Ascending aorta (tissue), 2 donors: ENCODE measurements at regions of chr5 and their contacts with region 1.

Region 1: DNA sequence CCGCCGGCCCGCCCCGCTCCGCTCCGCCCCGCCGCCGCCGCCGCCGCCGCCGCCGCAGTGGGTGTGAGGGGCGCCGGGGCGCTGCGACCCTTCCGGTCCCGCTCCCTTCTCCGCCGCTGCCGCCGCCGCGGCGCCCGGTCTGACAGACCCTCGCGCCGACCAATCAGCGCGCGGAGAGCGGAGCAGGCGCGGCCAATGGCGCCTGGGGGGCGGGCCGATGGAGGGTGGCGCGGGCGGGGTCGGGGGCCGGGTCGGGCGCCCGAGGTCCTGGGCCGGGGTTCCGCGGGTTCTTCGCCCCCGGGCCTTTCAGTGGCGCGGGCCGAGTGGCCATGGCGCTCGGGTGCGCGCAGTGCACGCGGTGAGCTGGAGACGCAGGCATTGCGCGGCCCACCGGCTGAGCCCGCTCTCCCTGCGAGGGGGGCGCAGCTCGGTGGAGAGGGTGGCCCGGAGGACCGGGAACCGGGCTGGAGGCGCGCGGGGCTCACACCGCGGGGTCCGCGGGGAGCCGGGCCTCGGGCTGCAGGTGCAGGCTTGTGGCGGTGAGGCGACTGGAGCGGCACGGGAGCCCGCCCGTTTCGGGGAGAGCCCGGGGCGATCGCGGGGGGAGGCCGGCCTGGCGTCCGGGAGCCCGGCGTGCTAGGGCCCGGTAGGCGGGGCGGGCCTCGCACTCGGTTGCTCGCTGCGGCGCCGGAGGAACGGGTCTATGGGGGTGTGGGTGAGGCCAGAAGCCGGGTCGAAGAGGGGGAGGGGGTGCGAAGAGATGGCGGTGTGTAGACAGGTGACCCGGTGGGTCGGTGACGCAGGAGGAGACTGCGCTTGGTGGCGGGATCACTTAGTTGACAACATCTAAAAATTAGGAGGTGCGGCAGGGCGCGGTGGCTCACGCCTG is at the start of gene MAPK9:
- DNase-seq: peak in 1 of 2 donors; percentile 89
- H3K4me3 ChIP-seq: peak within 1 kb of the TSS; percentile 84 to 88
- H3K27ac ChIP-seq: peak within 1 kb of the TSS; percentile 73 to 88
- H3K4me1 ChIP-seq: peaks cover 3 to 13% of the 10 kb centered on the region in 2 donors
- H3K27me3 ChIP-seq: no peaks in the 10 kb centered on the region
- CTCF ChIP-seq: no peak
- total RNA-seq, gene MAPK9: 12.9 TPM

Region 2: DNA sequence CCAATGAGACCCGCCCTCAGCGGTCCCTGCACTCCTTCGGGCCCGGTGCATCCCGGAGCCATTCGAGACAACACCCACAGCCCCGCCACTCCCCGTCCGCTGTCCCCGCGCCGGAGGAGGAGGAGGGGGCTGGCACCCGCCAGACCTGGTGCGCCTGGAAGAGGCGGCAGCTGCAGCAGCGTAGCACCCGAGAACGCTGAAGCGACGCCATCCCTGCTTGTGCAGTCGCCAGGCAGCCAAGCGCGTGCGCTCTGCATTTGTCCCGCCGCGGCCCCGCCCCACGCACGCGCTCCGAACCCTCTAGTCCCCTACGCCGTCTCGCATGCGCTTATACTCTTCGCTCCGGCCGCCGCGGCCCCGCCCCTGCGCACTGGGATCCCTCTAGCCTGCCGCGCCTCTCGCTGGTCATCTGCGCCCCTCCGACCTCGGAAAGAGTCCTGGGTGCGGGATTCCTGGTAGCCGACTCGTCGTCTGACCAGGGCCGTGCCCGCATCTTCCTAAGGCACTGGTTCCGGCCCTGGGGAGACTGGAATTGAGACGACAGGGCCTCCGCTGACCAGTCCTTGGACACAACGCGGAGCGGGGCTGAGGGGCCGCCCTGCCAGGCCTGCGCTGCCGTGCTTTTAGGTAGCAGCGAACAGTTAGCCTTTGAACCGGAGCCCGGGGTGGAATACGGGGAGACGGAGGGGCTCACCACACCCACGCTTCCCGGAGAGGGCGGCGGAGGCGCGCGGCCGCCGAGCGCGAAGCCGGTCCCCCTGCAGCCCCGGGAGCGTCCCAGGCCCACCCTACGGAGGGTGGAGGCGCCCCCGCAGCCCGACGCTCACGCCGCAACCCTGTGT is 433.4 kb before region 1 on chr5 and contains the start of gene MRNIP:
- intact Hi-C with region 1: loop called (anchors 10 kb)
- DNase-seq: peak; percentile 83 to 98
- H3K4me3 ChIP-seq: peak within 1 kb of the TSS; percentile 79 to 93
- H3K27ac ChIP-seq: peak within 1 kb of the TSS; percentile 78 to 86
- H3K4me1 ChIP-seq: peaks cover 0 to 8% of the 10 kb centered on the region in 2 donors
- H3K27me3 ChIP-seq: no peaks in the 10 kb centered on the region
- CTCF ChIP-seq: peak in 1 of 3 experiments; percentile 33
- total RNA-seq, gene MRNIP: 17.3 TPM

Region 3: GRCh38 chr5:180071531-180072255 is 220.5 kb before region 1 on chr5 and contains the start of gene RNF130:
- intact Hi-C with region 1: loop called (anchors 5 kb)
- DNase-seq: peak; percentile 72 to 95
- H3K4me3 ChIP-seq: peak within 1 kb of the TSS; percentile 74 to 94
- H3K27ac ChIP-seq: peak within 1 kb of the TSS; percentile 94 to 98
- H3K4me1 ChIP-seq: peaks cover 0 to 10% of the 10 kb centered on the region in 2 donors
- H3K27me3 ChIP-seq: no peaks in the 10 kb centered on the region
- CTCF ChIP-seq: no peak
- total RNA-seq, gene RNF130: 86.7 TPM

Region 4: GRCh38 chr5:180208435-180209081 is 83.6 kb before region 1 on chr5:
- intact Hi-C with region 1: no loop called
- DNase-seq: no peak
- H3K4me3 ChIP-seq: peak overlapping the region; percentile 21 to 37
- H3K27ac ChIP-seq: no peak overlapping the region
- H3K4me1 ChIP-seq: no peaks in the 10 kb centered on the region
- H3K27me3 ChIP-seq: no peaks in the 10 kb centered on the region
- CTCF ChIP-seq: no peak

Region 5: DNA sequence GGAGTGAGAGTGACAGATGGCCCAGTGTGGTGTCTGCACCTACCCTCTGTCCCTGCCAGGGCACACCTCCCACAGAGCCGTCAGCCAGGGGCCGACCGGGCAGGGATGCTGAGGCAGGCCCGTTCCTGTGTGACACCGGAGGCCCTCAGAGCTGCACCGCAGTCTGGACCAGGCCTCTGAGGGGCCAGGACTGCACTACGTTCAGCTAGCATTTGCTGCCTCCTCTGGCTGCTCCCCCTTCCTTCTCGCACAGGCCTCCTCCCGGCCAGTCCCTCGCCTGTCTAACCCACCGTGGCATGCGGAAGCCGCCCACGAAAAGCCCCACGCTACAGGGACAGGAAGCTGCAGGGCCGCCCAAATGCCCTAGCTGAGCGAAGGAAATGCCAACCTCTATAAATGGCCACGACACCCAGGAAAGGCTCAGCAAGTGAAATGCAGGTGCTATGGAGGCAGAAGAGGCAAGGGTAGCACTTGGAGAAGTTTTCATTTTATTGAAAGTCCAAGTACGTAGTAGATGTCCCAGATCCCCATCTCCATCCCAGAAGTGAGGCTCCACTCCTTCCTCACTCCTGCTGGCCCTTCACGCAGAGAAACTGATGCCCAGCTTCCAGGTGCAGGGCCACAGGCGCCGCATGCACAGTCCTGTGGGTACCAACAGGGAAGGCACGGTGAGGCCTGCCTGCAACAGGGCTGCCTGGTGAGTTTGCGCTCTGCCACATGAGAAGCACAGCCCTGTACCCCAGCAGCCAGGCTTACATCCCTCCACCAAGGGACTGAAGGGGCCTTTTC is 39.0 kb before region 1 on chr5:
- intact Hi-C with region 1: no loop called
- DNase-seq: no peak
- H3K4me3 ChIP-seq: no peak overlapping the region
- H3K27ac ChIP-seq: no peak overlapping the region
- H3K4me1 ChIP-seq: no peaks in the 10 kb centered on the region
- H3K27me3 ChIP-seq: no peaks in the 10 kb centered on the region
- CTCF ChIP-seq: no peak

Region 6: DNA sequence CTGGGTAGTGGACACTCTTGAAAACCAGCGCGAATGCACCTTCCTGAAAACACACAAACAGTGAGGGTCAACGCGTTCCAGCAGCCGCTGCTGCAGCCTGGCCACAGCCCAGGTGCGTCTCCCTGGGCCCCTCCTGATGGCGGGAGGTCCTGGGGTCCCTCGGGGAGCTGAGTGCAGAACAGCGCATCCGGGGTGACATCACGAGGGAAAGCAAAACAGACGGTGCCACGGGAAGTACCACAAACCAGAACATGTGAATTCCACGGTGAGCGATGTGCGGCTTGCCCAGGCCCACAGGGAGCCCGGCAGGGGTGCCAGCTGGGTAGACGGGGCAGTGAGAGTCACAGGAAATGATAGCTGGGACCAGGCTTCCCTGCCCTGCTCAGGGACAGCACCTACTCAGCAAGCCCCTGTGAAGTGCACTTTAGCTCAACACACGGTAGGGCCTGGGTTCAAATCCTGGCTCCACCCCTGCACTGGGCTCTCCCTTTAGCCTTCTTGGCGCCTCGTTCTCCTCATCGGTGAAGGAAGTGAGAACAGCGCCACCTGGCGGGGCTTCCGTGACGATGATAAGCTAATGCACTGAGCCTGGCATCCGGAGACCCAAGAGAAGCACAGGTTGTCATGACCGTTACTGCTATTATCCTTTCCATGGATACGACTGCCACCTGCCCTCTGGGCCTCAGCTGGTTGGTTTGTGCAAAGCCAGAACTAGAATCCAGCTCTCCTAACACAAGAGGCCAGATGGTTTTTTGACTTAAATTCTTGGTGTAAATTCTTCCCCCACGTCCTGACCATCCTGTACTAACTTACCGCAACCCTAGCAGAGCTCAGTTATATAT is 36.3 kb after region 1 on chr5:
- intact Hi-C with region 1: loop called (anchors 1 kb)
- DNase-seq: peak in 1 of 2 donors; percentile 88
- H3K4me3 ChIP-seq: no peak overlapping the region
- H3K27ac ChIP-seq: no peak overlapping the region
- H3K4me1 ChIP-seq: peaks cover 0 to 5% of the 10 kb centered on the region in 2 donors
- H3K27me3 ChIP-seq: no peaks in the 10 kb centered on the region
- CTCF ChIP-seq: peak; percentile 52 to 71 (median 65)

Region 7: GRCh38 chr5:180353048-180353979 is 61.1 kb after region 1 on chr5 and contains the start of gene GFPT2:
- intact Hi-C with region 1: loop called (anchors 1 kb)
- DNase-seq: peak; percentile 35 to 91
- H3K4me3 ChIP-seq: peak within 1 kb of the TSS; percentile 83 to 88
- H3K27ac ChIP-seq: peak within 1 kb of the TSS; percentile 51 to 62
- H3K4me1 ChIP-seq: peaks cover 0 to 3% of the 10 kb centered on the region in 2 donors
- H3K27me3 ChIP-seq: no peaks in the 10 kb centered on the region
- CTCF ChIP-seq: no peak
- total RNA-seq, gene GFPT2: 25.2 TPM

Region 8: GRCh38 chr5:180366326-180366725 is 74.1 kb after region 1 on chr5:
- intact Hi-C with region 1: no loop called
- DNase-seq: peak in 1 of 2 donors; percentile 79
- H3K4me3 ChIP-seq: peak overlapping the region in 1 of 2 donors; percentile 6
- H3K27ac ChIP-seq: peak overlapping the region; percentile 8 to 44
- H3K4me1 ChIP-seq: no peaks in the 10 kb centered on the region
- H3K27me3 ChIP-seq: no peaks in the 10 kb centered on the region
- CTCF ChIP-seq: no peak

Region 9: DNA sequence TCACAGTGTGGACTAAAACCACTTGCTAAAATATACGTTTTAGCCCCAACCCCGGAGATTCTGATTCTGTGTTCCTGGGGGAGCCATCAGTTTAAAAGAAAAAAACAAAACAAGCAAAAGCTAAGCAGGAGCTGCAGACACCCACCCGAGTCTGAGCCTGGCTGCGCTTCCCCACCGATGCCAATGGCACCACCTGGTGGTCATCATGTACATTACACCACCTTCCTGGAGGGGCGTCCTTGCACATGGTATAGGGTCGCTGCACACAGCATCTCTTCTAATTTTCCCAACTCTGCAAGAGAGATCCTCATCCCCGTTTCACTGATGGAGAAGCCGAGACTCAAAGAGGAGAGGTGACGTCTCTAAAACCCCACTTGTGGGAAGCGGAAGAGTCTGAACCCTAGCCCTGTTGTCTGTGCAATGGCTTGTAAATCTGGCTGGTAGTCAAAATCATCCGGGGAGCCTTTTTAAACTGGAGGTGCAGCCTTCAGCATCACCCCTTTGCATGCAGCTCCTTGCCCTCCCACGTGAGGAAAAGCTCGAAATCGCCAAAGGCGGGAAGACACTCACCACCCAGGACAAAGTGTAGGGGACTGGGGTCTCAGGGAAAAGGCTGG is 178.9 kb after region 1 on chr5:
- intact Hi-C with region 1: loop called (anchors 1 kb)
- DNase-seq: peak in 1 of 2 donors; percentile 70
- H3K4me3 ChIP-seq: no peak overlapping the region
- H3K27ac ChIP-seq: no peak overlapping the region
- H3K4me1 ChIP-seq: no peaks in the 10 kb centered on the region
- H3K27me3 ChIP-seq: no peaks in the 10 kb centered on the region
- CTCF ChIP-seq: peak; percentile 68 to 92 (median 91)

Region 10: GRCh38 chr5:180494060-180494509 is 201.9 kb after region 1 on chr5 and contains the start of gene CNOT6:
- intact Hi-C with region 1: loop called (anchors 1 kb)
- DNase-seq: peak; percentile 68 to 94
- H3K4me3 ChIP-seq: peak within 1 kb of the TSS; percentile 94 to 95
- H3K27ac ChIP-seq: peak within 1 kb of the TSS; percentile 84 to 98
- H3K4me1 ChIP-seq: peaks cover 4 to 15% of the 10 kb centered on the region in 2 donors
- H3K27me3 ChIP-seq: no peaks in the 10 kb centered on the region
- CTCF ChIP-seq: no peak
- total RNA-seq, gene CNOT6: 12.0 TPM